ENCODE measurements at regions of chr1 and their contacts with region 1.

Region 1: GRCh38 chr1:108125312-108126138 is 74.6 kb downstream of the SLC25A24 start:
- DNase-seq: no peak
- ATAC-seq: peak; percentile 91 to 93
- H3K4me3 ChIP-seq: no peak overlapping the region
- H3K27ac ChIP-seq: no peak overlapping the region
- H3K4me1 ChIP-seq: peaks cover 8% of the 10 kb centered on the region
- H3K27me3 ChIP-seq: peaks cover under 1% of the 10 kb centered on the region
- CTCF ChIP-seq: peak; percentile 92

Region 2: GRCh38 chr1:107782217-107782845 is 343.2 kb before region 1 on chr1:
- intact Hi-C with region 1: loop called (anchors 5 kb)
- DNase-seq: no peak
- ATAC-seq: peak; percentile 56 to 59
- H3K4me3 ChIP-seq: no peak overlapping the region
- H3K27ac ChIP-seq: no peak overlapping the region
- H3K4me1 ChIP-seq: peaks cover 22% of the 10 kb centered on the region
- H3K27me3 ChIP-seq: no peaks in the 10 kb centered on the region
- CTCF ChIP-seq: peak; percentile 73

Region 3: DNA sequence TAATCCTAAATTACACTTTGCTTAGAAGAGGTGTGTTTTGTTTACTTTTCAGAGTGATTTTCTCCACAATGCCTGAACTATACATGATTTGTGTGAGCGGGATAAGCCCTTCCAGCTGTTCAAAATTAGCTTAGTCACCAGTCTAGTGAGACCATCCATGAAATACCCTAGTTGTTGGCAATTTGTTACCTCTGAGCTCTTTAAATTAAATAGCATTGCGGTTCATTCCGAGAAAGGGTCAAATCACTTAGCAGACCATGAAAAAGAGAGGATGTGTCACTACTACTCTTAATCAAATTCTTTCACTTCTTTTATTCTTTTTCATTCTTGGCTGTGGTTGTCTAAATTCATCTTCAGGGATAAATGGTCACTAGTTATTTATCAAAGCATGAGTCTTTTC is 148.7 kb before region 1 on chr1:
- intact Hi-C with region 1: no loop called
- DNase-seq: no peak
- ATAC-seq: no peak
- H3K4me3 ChIP-seq: no peak overlapping the region
- H3K27ac ChIP-seq: no peak overlapping the region
- H3K4me1 ChIP-seq: no peaks in the 10 kb centered on the region
- H3K27me3 ChIP-seq: no peaks in the 10 kb centered on the region
- CTCF ChIP-seq: no peak

Measured in lower lobe of right lung (tissue), 2 donors.